ENCODE measurements at regions of chr9 and their contacts with region 1.

Region 1: DNA sequence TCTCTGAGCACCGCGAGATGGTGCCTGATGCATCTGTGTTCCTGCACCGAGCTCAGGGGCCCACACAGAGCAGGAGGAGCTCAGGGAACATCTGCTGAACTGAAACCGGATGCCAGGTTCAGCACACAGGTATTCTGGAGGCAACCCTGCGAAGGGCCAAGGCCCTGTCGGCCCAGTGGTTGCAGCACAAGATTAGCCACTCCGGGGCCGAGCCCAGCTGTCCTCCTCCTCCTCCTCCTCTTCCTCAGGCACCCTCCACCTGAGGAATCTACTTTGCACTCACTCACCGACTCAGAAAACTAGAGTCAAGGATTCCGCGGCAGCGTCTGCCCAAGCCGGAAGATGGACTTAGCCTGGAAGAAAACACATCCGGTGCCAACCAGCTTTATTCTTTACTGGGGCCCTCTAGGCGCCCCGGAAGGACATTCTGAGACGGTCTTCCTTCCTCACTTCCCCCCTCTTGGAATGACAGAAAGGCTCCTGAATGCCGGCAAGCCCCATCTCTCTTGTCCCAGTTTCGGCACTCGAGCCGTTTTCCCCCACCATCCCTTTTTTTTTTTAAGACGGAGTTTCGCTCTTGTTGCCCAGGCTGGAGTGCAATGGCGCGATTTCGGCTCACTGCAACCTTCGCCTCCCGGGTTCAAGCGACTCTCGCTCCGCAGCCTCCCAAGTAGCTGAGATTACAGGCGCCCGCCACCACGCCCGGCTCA is at the start of gene ZBTB6:
- DNase-seq: peak; percentile 61
- H3K4me3 Mint-ChIP-seq: peak within 1 kb of the TSS; percentile 98
- H3K27ac Mint-ChIP-seq: peak within 1 kb of the TSS; percentile 94
- H3K4me1 Mint-ChIP-seq: peaks cover 34% of the 10 kb centered on the region
- H3K27me3 Mint-ChIP-seq: no peaks in the 10 kb centered on the region
- total RNA-seq, gene ZBTB6: 12.1 and 12.6 TPM in 2 replicates

Region 2: DNA sequence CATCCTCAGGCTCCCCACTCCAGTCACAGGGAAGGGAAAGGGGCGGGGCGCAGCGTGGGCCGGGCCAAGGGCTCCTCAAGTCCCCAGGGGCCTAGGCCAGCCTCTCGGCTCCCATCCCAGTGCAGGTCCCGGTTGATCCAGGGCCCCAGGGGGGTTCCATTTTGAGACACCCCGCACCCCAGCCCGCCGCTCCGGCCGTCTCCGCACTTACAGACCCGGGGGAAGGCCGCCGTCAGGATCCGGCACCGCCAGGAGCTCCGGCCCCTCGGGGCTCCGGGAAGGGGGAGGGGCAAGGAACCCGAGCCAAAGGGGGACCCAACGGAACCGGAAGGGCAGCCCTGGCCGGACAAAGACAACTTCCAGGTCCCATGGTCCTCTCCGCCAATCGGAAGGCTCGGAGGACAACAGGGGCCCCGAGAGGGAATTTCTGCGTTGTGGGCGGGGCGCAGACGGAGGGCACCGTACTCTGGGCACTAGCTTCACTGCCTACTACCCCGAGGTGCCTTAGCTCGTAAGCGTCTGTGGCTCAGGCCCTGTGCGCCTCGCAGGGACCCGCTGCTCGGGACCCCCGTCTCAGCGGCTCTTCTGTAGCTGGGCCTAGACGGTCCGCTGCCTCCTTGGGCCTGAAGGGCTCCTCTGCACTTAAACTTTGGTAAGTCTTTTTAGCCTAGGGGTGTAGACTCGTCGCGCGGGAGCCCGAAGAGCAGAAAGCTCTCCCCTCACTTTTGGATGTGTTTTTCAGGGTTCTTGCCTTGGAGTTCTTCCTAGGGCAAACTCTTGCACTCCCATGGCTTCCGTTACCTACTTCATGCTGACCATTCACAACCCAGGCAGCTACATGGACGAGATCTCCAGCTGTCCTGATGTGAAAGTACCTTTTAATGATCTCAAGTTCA is 18.4 kb after region 1 on chr9 and contains the start of gene ZBTB26:
- intact Hi-C with region 1: loop called (anchors 1 kb)
- DNase-seq: peak; percentile 83
- H3K4me3 Mint-ChIP-seq: no peak within 1 kb of the TSS
- H3K27ac Mint-ChIP-seq: peak within 1 kb of the TSS; percentile 83
- H3K4me1 Mint-ChIP-seq: peaks cover 8% of the 10 kb centered on the region
- H3K27me3 Mint-ChIP-seq: no peaks in the 10 kb centered on the region
- total RNA-seq, gene ZBTB26: 8.3 and 9.9 TPM in 2 replicates

Region 3: DNA sequence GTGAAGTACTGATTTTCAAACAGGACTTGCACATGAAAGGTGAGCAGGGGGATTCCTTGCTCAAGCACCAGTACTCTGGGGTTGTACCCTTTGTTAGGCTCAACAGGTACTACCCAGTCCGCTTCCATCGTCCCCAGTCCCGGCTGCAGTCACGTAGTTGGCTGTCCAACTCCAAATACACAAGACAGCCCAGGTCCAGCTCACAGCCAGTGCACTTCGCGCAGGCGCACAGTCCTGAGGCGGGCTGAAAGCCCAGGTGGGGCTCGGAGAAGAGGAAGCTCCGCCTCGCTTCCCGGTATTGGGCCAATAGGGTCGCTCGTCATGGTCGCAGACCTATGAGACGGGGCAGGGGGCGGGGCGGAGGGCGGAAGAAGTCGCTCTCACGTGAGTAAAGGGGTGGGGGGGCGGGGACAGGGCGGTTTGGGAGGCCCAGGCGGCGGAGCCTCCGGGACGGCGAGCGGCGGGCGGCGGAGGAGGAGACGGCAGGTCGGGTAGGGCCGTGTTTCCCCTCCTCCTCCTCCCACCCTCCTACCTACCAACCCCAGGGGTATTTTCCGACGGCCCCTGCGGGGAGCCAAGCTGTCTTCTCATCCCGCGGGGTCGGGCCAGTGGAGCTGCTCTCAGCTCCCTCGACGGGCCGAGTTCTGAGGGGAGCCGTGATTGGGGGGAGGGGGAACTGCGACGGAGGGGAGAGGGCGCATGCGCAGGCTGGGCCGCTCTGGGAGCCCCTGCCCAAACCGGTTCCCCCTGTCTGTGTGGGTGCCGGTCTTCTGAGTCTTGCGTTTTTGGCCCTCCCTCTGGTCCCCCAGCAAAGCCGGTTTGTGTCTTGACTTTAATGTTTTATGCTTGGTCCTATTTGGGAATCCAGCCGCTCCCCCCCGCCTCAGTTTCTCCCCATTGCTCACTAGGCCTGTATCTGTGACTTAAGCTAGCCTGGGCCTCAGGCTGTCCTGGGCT is 27.8 kb after region 1 on chr9 and contains the start of gene RABGAP1:
- intact Hi-C with region 1: loop called (anchors 1 kb)
- DNase-seq: peak; percentile 97
- H3K4me3 Mint-ChIP-seq: peak within 1 kb of the TSS; percentile 98
- H3K27ac Mint-ChIP-seq: peak within 1 kb of the TSS; percentile 76
- H3K4me1 Mint-ChIP-seq: peaks cover 27% of the 10 kb centered on the region
- H3K27me3 Mint-ChIP-seq: peaks cover 1% of the 10 kb centered on the region
- total RNA-seq, gene RABGAP1: 26.6 and 30.2 TPM in 2 replicates